CD8-positive, alpha-beta T cell (primary cell): ENCODE measurements at regions of chr6 and their contacts with region 1.

Region 1: DNA sequence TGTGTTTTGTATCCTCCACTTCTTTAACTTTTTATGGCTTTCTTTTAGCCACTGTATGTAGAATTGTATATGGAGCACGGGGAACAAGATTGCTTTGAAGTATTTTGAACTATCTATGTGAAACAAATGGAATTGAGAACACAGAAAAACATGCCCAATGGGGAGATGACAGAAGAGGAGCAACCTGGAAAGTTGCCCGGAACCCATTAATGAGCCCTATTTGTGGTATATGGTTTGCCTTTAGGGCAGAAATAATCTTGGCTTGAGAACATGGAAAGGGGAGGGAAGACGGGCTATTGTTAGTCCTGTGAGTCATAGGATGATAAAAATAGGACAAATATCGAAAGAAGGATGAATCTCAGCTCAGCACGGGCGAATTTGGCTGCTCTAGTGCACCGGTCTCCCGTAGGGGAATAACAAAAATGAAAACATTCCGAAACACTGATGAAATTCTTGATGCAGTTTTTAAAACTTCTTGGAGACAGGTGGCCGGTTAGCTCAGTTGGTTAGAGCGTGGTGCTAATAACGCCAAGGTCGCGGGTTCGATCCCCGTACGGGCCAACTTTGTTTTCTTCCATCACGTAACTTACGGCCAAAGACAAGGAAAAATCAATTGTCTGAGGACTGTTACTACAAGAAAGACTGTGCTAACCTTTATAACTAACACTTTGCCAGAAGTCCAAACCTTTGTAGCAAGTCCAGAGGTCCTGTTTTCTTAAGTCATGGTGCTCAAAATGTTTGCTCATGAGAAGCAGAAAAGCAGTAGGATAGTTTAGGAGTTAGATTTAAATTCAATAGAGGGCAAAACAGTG is 15.7 kb downstream of the HMGN4 start:
- DNase-seq: peak; percentile 51 to 91 (median 73)
- ATAC-seq: peak; percentile 35
- H3K4me3 ChIP-seq: peak overlapping the region; percentile 64 to 70
- H3K4me3 Mint-ChIP-seq: no peak overlapping the region
- H3K27ac ChIP-seq: peak overlapping the region; percentile 17 to 60
- H3K27ac Mint-ChIP-seq: no peak overlapping the region
- H3K4me1 ChIP-seq: peaks cover 28% of the 10 kb centered on the region
- H3K4me1 Mint-ChIP-seq: peaks cover 21% of the 10 kb centered on the region
- H3K27me3 ChIP-seq: no peaks in the 10 kb centered on the region
- H3K27me3 Mint-ChIP-seq: no peaks in the 10 kb centered on the region
- CTCF ChIP-seq: no peak

Region 2: GRCh38 chr6:26175428-26176181 is 378.2 kb before region 1 on chr6:
- CTCF ChIA-PET with region 1: no interaction called
- POLR2A ChIA-PET with region 1: interaction called, 3 read pairs
- intact Hi-C with region 1: loop called in 1 of 2 experiments (anchors 5 kb)
- DNase-seq: peak in 7 of 9 experiments; percentile 33 to 87 (median 53)
- ATAC-seq: no peak
- H3K4me3 ChIP-seq: no peak overlapping the region
- H3K4me3 Mint-ChIP-seq: peak overlapping the region; percentile 3
- H3K27ac ChIP-seq: no peak overlapping the region
- H3K27ac Mint-ChIP-seq: peak overlapping the region; percentile 63
- H3K4me1 ChIP-seq: peaks cover 26% of the 10 kb centered on the region
- H3K4me1 Mint-ChIP-seq: peaks cover 39% of the 10 kb centered on the region
- H3K27me3 ChIP-seq: no peaks in the 10 kb centered on the region
- H3K27me3 Mint-ChIP-seq: no peaks in the 10 kb centered on the region
- CTCF ChIP-seq: peak; percentile 93

Region 3: DNA sequence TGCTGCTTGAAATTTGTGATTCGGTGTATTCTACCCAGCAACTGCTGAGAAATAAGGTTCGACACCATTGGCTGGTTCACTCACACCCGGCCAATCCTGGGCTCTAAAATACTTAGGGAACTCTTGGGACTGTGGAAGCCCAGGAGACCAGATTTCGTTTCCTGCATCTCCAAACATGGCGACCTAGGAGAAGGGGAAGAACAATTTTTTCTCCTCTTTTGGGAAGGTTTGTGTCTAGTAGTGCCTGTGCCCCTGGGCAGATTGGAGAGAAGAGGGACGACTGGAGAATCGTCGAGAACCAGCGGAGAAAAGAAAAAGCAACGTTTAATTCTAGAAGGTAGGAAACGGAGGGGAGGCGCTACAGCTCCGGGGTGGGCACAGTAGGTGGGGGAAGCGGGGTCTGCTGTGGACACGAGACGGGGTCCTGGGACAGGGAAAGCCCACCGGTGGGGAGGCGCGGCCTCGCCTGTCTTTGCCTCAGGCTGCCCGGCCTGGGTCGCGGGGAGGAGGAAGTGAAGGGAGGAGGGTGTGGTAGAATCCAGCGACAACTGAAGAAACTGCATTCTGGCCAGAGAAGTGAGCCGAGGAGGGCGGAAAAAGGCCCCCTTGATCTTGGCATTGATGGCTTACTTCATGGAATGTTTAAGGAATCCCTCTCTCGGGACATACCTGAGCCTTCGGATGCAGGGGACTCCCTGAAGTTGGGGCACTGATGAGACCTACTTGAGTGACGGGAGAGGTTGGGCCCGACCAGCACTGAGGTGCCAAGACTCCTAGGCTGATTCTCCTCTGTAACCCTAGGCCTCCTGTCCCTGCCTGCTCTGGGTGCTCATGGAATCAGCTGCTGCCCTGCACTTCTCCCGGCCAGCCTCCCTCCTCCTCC is 95.8 kb before region 1 on chr6 and contains the start of gene BTN2A1:
- CTCF ChIA-PET with region 1: no interaction called
- POLR2A ChIA-PET with region 1: no interaction called
- intact Hi-C with region 1: loop called in 1 of 2 experiments (anchors 5 kb)
- DNase-seq: peak; percentile 33 to 93 (median 65)
- ATAC-seq: peak; percentile 96
- H3K4me3 ChIP-seq: peak within 1 kb of the TSS; percentile 64 to 78
- H3K4me3 Mint-ChIP-seq: peak within 1 kb of the TSS; percentile 100
- H3K27ac ChIP-seq: peak within 1 kb of the TSS; percentile 61 to 92
- H3K27ac Mint-ChIP-seq: peak within 1 kb of the TSS; percentile 99
- H3K4me1 ChIP-seq: peaks cover 48% of the 10 kb centered on the region
- H3K4me1 Mint-ChIP-seq: peaks cover 68% of the 10 kb centered on the region
- H3K27me3 ChIP-seq: no peaks in the 10 kb centered on the region
- H3K27me3 Mint-ChIP-seq: no peaks in the 10 kb centered on the region
- CTCF ChIP-seq: no peak
- total RNA-seq, gene BTN2A1: 16.4 to 17.3 TPM

Region 4: DNA sequence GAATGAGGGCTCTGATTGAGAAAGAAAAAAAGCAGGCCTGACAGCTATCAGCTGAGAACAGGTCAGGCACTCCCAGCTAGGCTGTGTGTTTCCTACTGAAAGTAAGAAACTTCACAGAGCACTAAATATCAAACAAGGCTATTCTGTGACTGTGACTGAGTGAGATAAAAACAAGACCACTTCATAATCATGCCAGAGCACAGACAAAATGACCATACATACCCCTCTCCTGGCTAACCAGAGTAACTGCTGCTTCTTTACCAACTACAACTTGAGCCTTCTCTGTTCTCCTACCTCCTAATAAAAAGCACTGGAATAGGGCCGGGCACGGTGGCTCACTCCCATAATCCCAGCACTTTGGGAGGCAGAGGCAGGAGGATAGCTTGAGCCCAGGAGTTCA is 60.6 kb before region 1 on chr6:
- CTCF ChIA-PET with region 1: no interaction called
- POLR2A ChIA-PET with region 1: no interaction called
- intact Hi-C with region 1: loop called in 1 of 2 experiments (anchors 2 kb)
- DNase-seq: peak in 2 of 9 experiments; percentile 26 to 50
- ATAC-seq: peak; percentile 67
- H3K4me3 ChIP-seq: no peak overlapping the region
- H3K4me3 Mint-ChIP-seq: no peak overlapping the region
- H3K27ac ChIP-seq: no peak overlapping the region
- H3K27ac Mint-ChIP-seq: no peak overlapping the region
- H3K4me1 ChIP-seq: no peaks in the 10 kb centered on the region
- H3K4me1 Mint-ChIP-seq: peaks cover 3% of the 10 kb centered on the region
- H3K27me3 ChIP-seq: no peaks in the 10 kb centered on the region
- H3K27me3 Mint-ChIP-seq: no peaks in the 10 kb centered on the region
- CTCF ChIP-seq: peak; percentile 31

Region 5: DNA sequence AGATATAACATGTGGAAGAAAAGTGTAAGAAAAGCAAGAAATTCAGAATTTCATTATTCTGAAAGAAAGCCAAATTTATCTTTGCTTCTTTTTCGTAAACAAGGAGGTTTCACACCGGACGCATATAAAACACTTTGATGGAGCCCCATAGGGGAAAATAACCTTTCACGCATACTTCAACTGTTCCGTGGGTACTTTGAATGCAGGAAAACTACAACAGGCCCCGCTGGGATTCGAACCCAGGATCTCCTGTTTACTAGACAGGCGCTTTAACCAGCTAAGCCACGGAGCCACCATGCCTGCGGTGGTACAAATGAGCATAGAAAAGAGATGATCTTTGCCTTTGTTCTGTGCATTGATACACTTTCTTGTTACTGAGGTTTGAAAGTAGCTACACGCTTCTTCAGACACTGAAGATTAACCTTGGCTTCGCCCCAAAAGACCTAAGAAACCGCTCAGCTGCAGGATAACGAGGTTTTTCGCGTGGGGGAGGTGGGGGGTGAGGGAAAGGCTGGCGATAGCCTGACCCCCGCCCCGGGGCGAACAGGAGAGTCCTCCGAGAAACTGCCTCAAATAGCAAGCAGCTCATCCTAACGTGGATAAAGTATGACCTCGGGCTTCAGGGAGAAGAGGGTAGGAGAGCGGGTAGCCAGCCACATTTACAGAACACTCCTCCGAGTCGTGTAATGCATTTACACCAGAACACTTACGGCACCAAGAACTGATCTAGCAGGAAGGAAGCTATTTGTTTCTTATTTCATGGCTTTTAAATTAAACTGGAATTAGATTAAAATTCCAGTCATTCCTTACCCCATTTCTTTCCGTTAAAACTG is 20.9 kb before region 1 on chr6:
- CTCF ChIA-PET with region 1: interaction called, 11 read pairs
- POLR2A ChIA-PET with region 1: interaction called, 54 read pairs
- intact Hi-C with region 1: loop called (anchors 1 kb)
- DNase-seq: peak; percentile 82 to 97 (median 91)
- ATAC-seq: peak; percentile 35
- H3K4me3 ChIP-seq: peak overlapping the region; percentile 69 to 80
- H3K4me3 Mint-ChIP-seq: peak overlapping the region; percentile 100
- H3K27ac ChIP-seq: peak overlapping the region; percentile 53 to 57
- H3K27ac Mint-ChIP-seq: peak overlapping the region; percentile 97
- H3K4me1 ChIP-seq: peaks cover 25% of the 10 kb centered on the region
- H3K4me1 Mint-ChIP-seq: peaks cover 52% of the 10 kb centered on the region
- H3K27me3 ChIP-seq: no peaks in the 10 kb centered on the region
- H3K27me3 Mint-ChIP-seq: peaks cover 2% of the 10 kb centered on the region
- CTCF ChIP-seq: no peak

Region 6: DNA sequence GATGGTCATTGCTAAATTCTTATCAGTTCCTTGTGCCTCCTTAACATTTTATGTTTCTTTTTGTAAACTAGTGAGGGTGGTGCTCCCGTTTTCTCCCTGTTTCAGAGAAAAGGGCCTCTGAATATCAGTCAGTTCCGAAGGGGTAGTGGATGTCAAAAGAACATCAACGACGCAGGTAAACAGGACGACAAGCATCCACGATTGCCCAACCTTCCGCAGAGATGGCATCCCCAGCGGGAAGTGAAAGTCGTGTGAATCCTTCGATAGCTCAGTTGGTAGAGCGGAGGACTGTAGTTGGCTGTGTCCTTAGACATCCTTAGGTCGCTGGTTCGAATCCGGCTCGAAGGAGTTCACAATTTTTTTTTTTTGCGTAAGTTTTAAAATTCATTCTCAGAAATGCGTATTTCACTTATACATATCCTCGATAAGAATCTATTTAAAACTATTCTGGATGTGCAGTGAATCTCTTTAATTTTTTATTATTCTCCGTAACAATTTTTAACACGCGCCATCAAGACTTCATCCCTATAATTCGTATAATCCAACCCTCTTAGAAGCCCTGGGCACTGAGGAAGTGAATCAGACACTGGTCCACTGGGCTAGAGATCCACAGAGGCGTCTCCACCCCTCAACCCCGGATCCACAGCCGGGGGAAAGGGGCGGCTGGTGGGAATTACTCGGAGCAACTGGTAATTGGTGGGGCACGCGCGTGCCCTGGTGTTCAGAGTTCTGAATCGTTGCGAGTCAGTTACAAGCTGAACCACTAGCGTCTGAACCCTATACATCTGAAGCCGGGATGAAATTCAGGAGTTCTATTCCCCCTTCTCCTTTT is 15.0 kb after region 1 on chr6:
- CTCF ChIA-PET with region 1: interaction called, 17 read pairs
- POLR2A ChIA-PET with region 1: interaction called, 10 read pairs
- intact Hi-C with region 1: loop called (anchors 1 kb)
- DNase-seq: peak; percentile 95 to 100 (median 99)
- ATAC-seq: peak; percentile 73
- H3K4me3 ChIP-seq: peak overlapping the region; percentile 74 to 90
- H3K4me3 Mint-ChIP-seq: peak overlapping the region; percentile 92
- H3K27ac ChIP-seq: peak overlapping the region; percentile 79 to 80
- H3K27ac Mint-ChIP-seq: peak overlapping the region; percentile 97
- H3K4me1 ChIP-seq: peaks cover 15% of the 10 kb centered on the region
- H3K4me1 Mint-ChIP-seq: peaks cover 20% of the 10 kb centered on the region
- H3K27me3 ChIP-seq: no peaks in the 10 kb centered on the region
- H3K27me3 Mint-ChIP-seq: peaks cover 2% of the 10 kb centered on the region
- CTCF ChIP-seq: peak; percentile 34

Region 7: DNA sequence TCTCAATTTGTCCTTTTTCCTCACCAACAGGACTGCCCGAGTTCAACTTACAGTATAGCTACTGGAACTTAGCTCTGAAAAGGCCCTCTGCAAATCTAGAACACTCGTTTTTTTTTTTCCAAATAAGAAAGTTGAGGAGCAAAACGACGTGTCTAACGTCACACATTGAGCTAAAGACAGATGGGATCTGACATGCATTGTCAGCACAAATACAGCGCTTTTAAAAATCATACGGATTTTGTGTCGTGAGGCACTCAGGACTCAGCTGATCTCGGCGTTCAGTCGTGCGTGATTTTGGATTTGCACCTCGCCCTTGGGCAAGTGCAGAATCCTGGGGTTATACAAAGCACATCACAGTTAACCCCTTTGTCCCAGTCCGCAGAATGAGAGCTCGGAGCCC is 200.4 kb after region 1 on chr6:
- CTCF ChIA-PET with region 1: no interaction called
- POLR2A ChIA-PET with region 1: no interaction called
- intact Hi-C with region 1: no loop called
- DNase-seq: peak in 1 of 9 experiments; percentile 4
- ATAC-seq: no peak
- H3K4me3 ChIP-seq: no peak overlapping the region
- H3K4me3 Mint-ChIP-seq: no peak overlapping the region
- H3K27ac ChIP-seq: no peak overlapping the region
- H3K27ac Mint-ChIP-seq: no peak overlapping the region
- H3K4me1 ChIP-seq: no peaks in the 10 kb centered on the region
- H3K4me1 Mint-ChIP-seq: peaks cover 5% of the 10 kb centered on the region
- H3K27me3 ChIP-seq: peaks cover 7 to 22% of the 10 kb centered on the region in 2 experiments
- H3K27me3 Mint-ChIP-seq: peaks cover 45% of the 10 kb centered on the region
- CTCF ChIP-seq: no peak

Region 8: GRCh38 chr6:27472617-27473400 is 919.0 kb after region 1 on chr6 and contains the start of gene ZNF184:
- CTCF ChIA-PET with region 1: no interaction called
- POLR2A ChIA-PET with region 1: no interaction called
- intact Hi-C with region 1: loop called in 1 of 2 experiments (anchors 5 kb)
- DNase-seq: peak; percentile 71 to 94 (median 84)
- ATAC-seq: peak; percentile 63
- H3K4me3 ChIP-seq: peak within 1 kb of the TSS; percentile 80 to 90
- H3K4me3 Mint-ChIP-seq: peak within 1 kb of the TSS; percentile 96
- H3K27ac ChIP-seq: peak within 1 kb of the TSS; percentile 94 to 96
- H3K27ac Mint-ChIP-seq: peak within 1 kb of the TSS; percentile 96
- H3K4me1 ChIP-seq: peaks cover 26% of the 10 kb centered on the region
- H3K4me1 Mint-ChIP-seq: peaks cover 48% of the 10 kb centered on the region
- H3K27me3 ChIP-seq: no peaks in the 10 kb centered on the region
- H3K27me3 Mint-ChIP-seq: no peaks in the 10 kb centered on the region
- CTCF ChIP-seq: no peak
- total RNA-seq, gene ZNF184: 31.8 to 32.9 TPM